HepG2 (cell line): ENCODE measurements at regions of chr17 and their contacts with region 1.

Region 1: GRCh38 chr17:3683054-3683511 is 12.9 kb downstream of the P2RX5 start:
- DNase-seq: peak; percentile 27
- ATAC-seq: peak; percentile 65
- H3K4me3 ChIP-seq: no peak overlapping the region
- H3K27ac ChIP-seq: no peak overlapping the region
- H3K4me1 ChIP-seq: peaks cover 10% of the 10 kb centered on the region
- H3K27me3 ChIP-seq: peaks cover 2 to 7% of the 10 kb centered on the region in 2 experiments; a peak in 4 of 5 replicates
- CTCF ChIP-seq: peak; percentile 91
- EP300 ChIP-seq: no peak
- POLR2A ChIP-seq: no peak
- RAD21 ChIP-seq: peak; percentile 44

Region 2: GRCh38 chr17:3732210-3732621 is 49.1 kb after region 1 on chr17:
- CTCF ChIA-PET with region 1: interaction called, 7 read pairs
- POLR2A ChIA-PET with region 1: no interaction called
- in situ Hi-C with region 1: no loop called
- intact Hi-C with region 1: loop called (anchors 5 kb)
- DNase-seq: peak; percentile 59
- ATAC-seq: peak; percentile 77
- H3K4me3 ChIP-seq: peak overlapping the region; percentile 31 to 56 (median 35)
- H3K27ac ChIP-seq: peak overlapping the region; percentile 4
- H3K4me1 ChIP-seq: peaks cover 42% of the 10 kb centered on the region
- H3K27me3 ChIP-seq: no peaks in the 10 kb centered on the region
- CTCF ChIP-seq: peak; percentile 78
- EP300 ChIP-seq: no peak
- POLR2A ChIP-seq: no peak
- RAD21 ChIP-seq: no peak